Gastrocnemius medialis (tissue), 4 donors: ENCODE measurements at regions of chr2 and their contacts with region 1.

Region 1: GRCh38 chr2:97806738-97807618 is 93.6 kb downstream of the ZAP70 start:
- DNase-seq: peak; percentile 74 to 83
- ATAC-seq: peak; percentile 88 to 95
- H3K4me3 ChIP-seq: no peak overlapping the region
- H3K27ac ChIP-seq: peak overlapping the region; percentile 65 to 77 (median 74)
- H3K4me1 ChIP-seq: peaks cover 8 to 15% of the 10 kb centered on the region in 2 donors
- H3K27me3 ChIP-seq: no peaks in the 10 kb centered on the region
- CTCF ChIP-seq: peak; percentile 90 to 96 (median 95)
- POLR2A ChIP-seq: no peak

Region 2: GRCh38 chr2:98009887-98010760 is 203.1 kb after region 1 on chr2:
- in situ Hi-C with region 1: no loop called
- intact Hi-C with region 1: loop called (anchors 2 kb)
- DNase-seq: peak; percentile 35 to 74
- ATAC-seq: peak; percentile 77 to 88
- H3K4me3 ChIP-seq: no peak overlapping the region
- H3K27ac ChIP-seq: peak overlapping the region; percentile 89 to 92 (median 90)
- H3K4me1 ChIP-seq: peaks cover 20 to 23% of the 10 kb centered on the region in 2 donors
- H3K27me3 ChIP-seq: no peaks in the 10 kb centered on the region
- CTCF ChIP-seq: no peak
- POLR2A ChIP-seq: no peak

Region 3: DNA sequence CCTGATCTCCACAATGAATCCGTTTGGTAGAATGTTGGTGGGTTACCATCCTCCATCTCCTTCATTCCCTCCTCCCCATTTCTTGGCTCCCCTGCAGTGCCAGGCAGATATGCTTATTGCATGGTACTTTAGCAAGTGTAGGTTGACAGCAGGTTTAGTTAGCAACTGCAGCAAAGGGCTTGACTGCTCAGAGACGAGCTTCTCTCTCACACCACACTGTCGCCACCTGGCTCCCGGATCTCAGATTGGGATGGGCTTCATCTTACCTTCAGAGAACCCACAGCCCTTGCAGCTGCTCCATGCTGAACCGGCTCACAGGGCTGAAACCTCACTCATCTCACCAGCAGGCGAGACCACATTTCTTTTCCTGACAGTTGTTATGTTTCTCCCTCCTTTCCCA is 368.8 kb after region 1 on chr2:
- in situ Hi-C with region 1: loop called in 2 of 4 experiments (anchors 25 kb)
- intact Hi-C with region 1: no loop called
- DNase-seq: peak in 1 of 2 donors; percentile 29
- ATAC-seq: peak in 1 of 2 donors; percentile 34
- H3K4me3 ChIP-seq: no peak overlapping the region
- H3K27ac ChIP-seq: no peak overlapping the region
- H3K4me1 ChIP-seq: peaks cover 4% of the 10 kb centered on the region in 2 donors
- H3K27me3 ChIP-seq: no peaks in the 10 kb centered on the region
- CTCF ChIP-seq: peak in 1 of 5 experiments; percentile 35
- POLR2A ChIP-seq: no peak

Region 4: DNA sequence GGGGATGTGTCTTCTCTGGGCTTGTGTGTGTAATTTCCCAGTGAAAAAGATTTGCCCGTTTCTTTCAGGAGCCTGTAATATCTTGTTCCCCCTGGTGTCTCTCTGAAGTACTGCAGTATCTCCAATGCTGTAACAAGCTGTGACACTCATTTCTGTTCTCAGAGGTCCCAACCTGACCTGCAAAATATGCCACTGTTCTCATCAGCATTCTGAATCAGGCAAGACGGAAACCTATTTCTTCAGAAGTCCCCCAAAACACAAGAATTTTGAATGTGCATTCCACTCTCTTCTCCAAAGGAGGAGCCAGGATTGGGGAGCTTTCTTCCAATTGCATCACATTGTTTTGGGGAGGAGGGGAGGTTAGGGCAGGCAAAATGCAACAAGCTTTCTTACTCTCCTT is 462.3 kb after region 1 on chr2:
- in situ Hi-C with region 1: loop called in 2 of 4 experiments (anchors 25 kb)
- intact Hi-C with region 1: loop called (anchors 1 kb)
- DNase-seq: no peak
- ATAC-seq: peak; percentile 54 to 83
- H3K4me3 ChIP-seq: no peak overlapping the region
- H3K27ac ChIP-seq: no peak overlapping the region
- H3K4me1 ChIP-seq: no peaks in the 10 kb centered on the region
- H3K27me3 ChIP-seq: no peaks in the 10 kb centered on the region
- CTCF ChIP-seq: peak; percentile 56 to 73 (median 68)
- POLR2A ChIP-seq: no peak